ENCODE measurements at regions of chr5 and their contacts with region 1.

Region 1: DNA sequence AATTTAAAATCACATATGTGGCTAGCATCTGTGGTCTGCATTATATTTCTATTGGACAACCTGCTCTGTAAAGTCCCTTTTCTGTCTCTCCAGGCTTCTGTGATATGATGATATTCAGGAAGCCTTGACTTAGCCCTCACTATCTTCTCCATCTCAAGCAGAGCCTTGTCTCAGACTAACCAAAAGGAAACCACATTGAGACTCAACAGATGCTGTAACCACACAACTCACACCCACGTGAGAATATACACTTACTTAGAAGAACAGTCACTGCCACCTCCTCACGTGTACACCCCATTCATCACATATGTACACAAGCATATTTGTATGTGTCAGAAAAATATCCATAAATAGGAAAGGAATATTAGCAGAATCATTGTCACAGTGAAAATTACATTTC is 33.6 kb downstream of the HTR4 start:
- DNase-seq: peak; percentile 19
- H3K4me3 Mint-ChIP-seq: no peak overlapping the region
- H3K27ac Mint-ChIP-seq: no peak overlapping the region
- H3K4me1 Mint-ChIP-seq: peaks cover 22% of the 10 kb centered on the region
- H3K27me3 Mint-ChIP-seq: peaks cover 8% of the 10 kb centered on the region

Region 2: GRCh38 chr5:148193202-148193601 is 427.5 kb before region 1 on chr5:
- CTCF ChIA-PET with region 1: no interaction called
- POLR2A ChIA-PET with region 1: no interaction called
- intact Hi-C with region 1: loop called (anchors 2 kb)
- DNase-seq: no peak
- H3K4me3 Mint-ChIP-seq: no peak overlapping the region
- H3K27ac Mint-ChIP-seq: no peak overlapping the region
- H3K4me1 Mint-ChIP-seq: no peaks in the 10 kb centered on the region
- H3K27me3 Mint-ChIP-seq: peaks cover 2% of the 10 kb centered on the region

Region 3: GRCh38 chr5:148708854-148709253 is 88.2 kb after region 1 on chr5:
- CTCF ChIA-PET with region 1: no interaction called
- POLR2A ChIA-PET with region 1: no interaction called
- intact Hi-C with region 1: loop called (anchors 1 kb)
- DNase-seq: peak; percentile 48
- H3K4me3 Mint-ChIP-seq: no peak overlapping the region
- H3K27ac Mint-ChIP-seq: no peak overlapping the region
- H3K4me1 Mint-ChIP-seq: peaks cover 15% of the 10 kb centered on the region
- H3K27me3 Mint-ChIP-seq: peaks cover 25% of the 10 kb centered on the region

Region 4: GRCh38 chr5:149357370-149358293 is 736.9 kb after region 1 on chr5 and contains the start of gene PCYOX1L:
- CTCF ChIA-PET with region 1: no interaction called
- POLR2A ChIA-PET with region 1: no interaction called
- intact Hi-C with region 1: no loop called
- DNase-seq: peak; percentile 95
- H3K4me3 Mint-ChIP-seq: peak within 1 kb of the TSS; percentile 90
- H3K27ac Mint-ChIP-seq: peak within 1 kb of the TSS; percentile 89
- H3K4me1 Mint-ChIP-seq: peaks cover 64% of the 10 kb centered on the region
- H3K27me3 Mint-ChIP-seq: no peaks in the 10 kb centered on the region
- total RNA-seq, gene PCYOX1L: 21.8 to 24.0 TPM

Measured in activated CD4-positive, alpha-beta memory T cell treated with anti-CD3 and anti-CD28 coated beads for 36 hours (primary cell).